AG04450 (cell line): ENCODE measurements at regions of chr3 and their contacts with region 1.

Region 1: DNA sequence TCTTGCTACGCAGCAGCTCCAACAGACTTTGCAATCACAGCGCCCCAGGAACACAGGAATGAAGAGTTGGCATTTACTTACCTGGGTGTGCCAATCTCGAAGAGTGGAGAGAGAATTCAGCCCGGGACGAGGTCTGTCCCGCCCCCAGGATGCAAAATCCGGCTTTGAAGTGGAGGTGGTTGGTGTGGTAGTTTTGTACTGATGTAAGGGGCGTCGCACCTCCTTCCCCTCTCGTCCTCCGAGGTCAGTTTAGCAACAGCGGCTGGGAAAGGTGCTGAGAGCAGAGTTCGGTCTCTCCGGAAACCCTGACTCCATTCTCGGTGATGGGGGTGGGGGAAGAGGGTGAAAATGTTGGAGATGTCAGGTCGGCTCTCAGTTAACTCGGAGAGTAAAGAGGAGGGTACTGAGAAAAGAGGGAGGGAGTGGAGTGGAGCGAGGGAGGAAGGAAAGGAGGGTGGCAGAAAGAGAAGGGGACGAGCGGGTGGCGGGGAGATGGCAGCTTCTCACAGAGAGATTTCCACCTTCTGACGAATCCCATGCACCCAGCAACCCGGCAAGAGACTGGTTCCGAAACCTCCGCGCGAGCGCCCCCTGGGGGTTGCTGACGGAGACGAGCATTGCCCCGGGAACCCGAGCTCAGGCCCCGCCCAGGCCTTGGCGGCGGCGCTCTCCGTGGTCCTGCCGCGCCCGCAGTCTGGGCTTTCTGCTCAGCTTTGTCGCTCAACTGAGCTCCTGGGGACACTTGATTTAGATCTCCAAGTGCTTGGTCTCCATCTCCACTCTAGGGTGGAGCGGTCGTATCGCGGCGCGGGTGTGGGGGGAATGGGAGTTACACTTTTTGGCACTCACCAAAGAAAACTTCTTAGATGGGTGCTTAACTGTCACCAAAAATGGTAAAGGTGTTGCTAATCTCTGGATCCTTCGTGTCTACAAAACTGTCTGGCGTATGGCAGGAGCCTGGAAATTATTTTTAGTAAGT is at the start of gene CPNE4:
- DNase-seq: peak; percentile 21
- H3K4me3 ChIP-seq: peak within 1 kb of the TSS; percentile 38; the same call in 1 of the 2 replicates
- H3K27ac ChIP-seq: no peak within 1 kb of the TSS
- H3K27me3 ChIP-seq: peaks cover 19% of the 10 kb centered on the region
- CTCF ChIP-seq: peak; percentile 85
- polyA plus RNA-seq, gene CPNE4: 0.25 TPM in 1 of 2 replicates, not detected in the other

Region 2: GRCh38 chr3:132047209-132047608 is 12.4 kb after region 1 on chr3:
- CTCF ChIA-PET with region 1: interaction called, 13 read pairs
- POLR2A ChIA-PET with region 1: no interaction called
- DNase-seq: no peak
- H3K4me3 ChIP-seq: no peak overlapping the region
- H3K27ac ChIP-seq: no peak overlapping the region
- H3K27me3 ChIP-seq: no peaks in the 10 kb centered on the region
- CTCF ChIP-seq: no peak

Region 3: DNA sequence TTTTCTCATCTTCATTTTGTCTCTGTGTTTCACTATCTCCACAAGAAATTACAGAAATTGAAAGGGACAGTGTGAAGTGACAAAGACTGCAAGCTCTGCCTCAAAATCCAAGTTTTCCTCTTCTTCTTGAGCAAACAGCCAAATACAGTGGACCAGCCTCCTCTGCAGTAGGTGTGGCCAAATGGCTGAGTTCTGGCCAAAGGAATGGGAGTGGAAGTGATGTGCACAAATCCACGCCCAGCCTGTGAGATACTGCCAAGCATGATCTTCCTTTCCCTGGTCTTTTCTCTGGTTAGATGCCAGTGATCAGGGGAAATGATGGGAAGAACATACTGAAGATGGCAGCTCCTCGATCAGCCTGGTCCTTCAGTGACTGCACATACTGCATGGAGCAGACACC is 111.1 kb after region 1 on chr3:
- CTCF ChIA-PET with region 1: interaction called, 12 read pairs
- POLR2A ChIA-PET with region 1: no interaction called
- DNase-seq: no peak
- H3K4me3 ChIP-seq: no peak overlapping the region
- H3K27ac ChIP-seq: no peak overlapping the region
- H3K27me3 ChIP-seq: no peaks in the 10 kb centered on the region
- CTCF ChIP-seq: no peak

Region 4: DNA sequence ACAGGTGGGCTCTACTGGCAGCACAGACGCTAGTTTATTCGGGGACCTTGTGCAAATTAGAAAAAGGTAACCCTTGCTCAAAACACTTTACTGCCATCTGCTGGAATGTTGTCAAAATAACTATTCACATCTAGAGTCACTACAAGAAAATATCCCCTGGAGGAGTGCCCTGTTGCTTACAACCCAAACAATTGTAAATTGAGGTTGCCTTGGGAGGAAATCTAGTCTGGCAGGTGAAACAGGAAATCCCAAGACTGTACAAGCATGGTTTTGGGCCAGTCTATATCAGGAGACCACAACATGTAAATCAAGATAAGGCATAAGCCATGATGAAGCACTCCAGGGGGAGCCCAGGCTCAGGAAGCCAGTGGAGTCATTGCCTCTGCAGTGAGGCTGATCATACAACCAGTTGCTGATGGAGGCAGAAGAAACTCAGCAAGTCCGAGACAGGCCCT is 145.6 kb after region 1 on chr3:
- CTCF ChIA-PET with region 1: interaction called, 337 read pairs
- POLR2A ChIA-PET with region 1: no interaction called
- DNase-seq: peak; percentile 20
- H3K4me3 ChIP-seq: no peak overlapping the region
- H3K27ac ChIP-seq: no peak overlapping the region
- H3K27me3 ChIP-seq: peaks cover 2% of the 10 kb centered on the region
- CTCF ChIP-seq: peak; percentile 66

Region 5: DNA sequence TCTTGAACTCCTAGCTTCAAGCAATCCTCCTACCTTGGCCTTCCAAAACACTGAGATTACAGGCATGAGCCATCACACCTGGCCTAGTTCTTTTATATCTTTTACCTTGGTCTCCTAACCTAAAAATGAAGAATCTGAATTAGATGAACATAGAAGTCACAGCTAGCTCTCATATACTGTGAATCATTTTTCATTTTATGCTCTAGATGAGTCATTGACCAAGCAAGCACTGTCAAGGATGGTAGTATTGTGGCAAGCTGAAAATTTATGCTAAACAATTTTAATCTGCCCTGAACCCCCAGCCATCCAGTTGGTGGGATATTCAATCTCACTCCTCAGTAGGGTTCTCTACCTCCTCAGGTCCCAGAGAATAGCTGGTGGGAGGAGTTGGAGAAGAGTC is 334.2 kb after region 1 on chr3:
- CTCF ChIA-PET with region 1: no interaction called
- POLR2A ChIA-PET with region 1: no interaction called
- DNase-seq: no peak
- H3K4me3 ChIP-seq: no peak overlapping the region
- H3K27ac ChIP-seq: no peak overlapping the region
- H3K27me3 ChIP-seq: peaks cover 3% of the 10 kb centered on the region
- CTCF ChIP-seq: no peak

Region 6: GRCh38 chr3:132399054-132399929 is 364.5 kb after region 1 on chr3:
- CTCF ChIA-PET with region 1: interaction called, 19 read pairs
- POLR2A ChIA-PET with region 1: no interaction called
- DNase-seq: peak; percentile 42
- H3K4me3 ChIP-seq: no peak overlapping the region
- H3K27ac ChIP-seq: no peak overlapping the region
- H3K27me3 ChIP-seq: no peaks in the 10 kb centered on the region
- CTCF ChIP-seq: peak; percentile 90